PC-3 (cell line): ENCODE measurements at regions of chr14 and their contacts with region 1.

Region 1: GRCh38 chr14:97212399-97212798 is 415.2 kb downstream of the VRK1 start:
- DNase-seq: no peak
- ATAC-seq: no peak
- H3K4me3 ChIP-seq: no peak overlapping the region
- H3K27ac ChIP-seq: no peak overlapping the region
- H3K4me1 ChIP-seq: no peaks in the 10 kb centered on the region
- H3K27me3 ChIP-seq: peaks cover 97% of the 10 kb centered on the region
- CTCF ChIP-seq: no peak

Region 2: GRCh38 chr14:97248973-97249372 is 36.6 kb after region 1 on chr14:
- CTCF ChIA-PET with region 1: interaction called, 3 read pairs
- POLR2A ChIA-PET with region 1: no interaction called
- intact Hi-C with region 1: loop called (anchors 5 kb)
- DNase-seq: no peak
- ATAC-seq: no peak
- H3K4me3 ChIP-seq: no peak overlapping the region
- H3K27ac ChIP-seq: no peak overlapping the region
- H3K4me1 ChIP-seq: 0 out of 2 replicates have a peak, but pooled peaks cover 6% of the 10 kb centered on the region
- H3K27me3 ChIP-seq: peaks cover 50% of the 10 kb centered on the region
- CTCF ChIP-seq: no peak

Region 3: GRCh38 chr14:97410667-97411620 is 198.5 kb after region 1 on chr14:
- CTCF ChIA-PET with region 1: no interaction called
- POLR2A ChIA-PET with region 1: no interaction called
- intact Hi-C with region 1: loop called (anchors 5 kb)
- DNase-seq: peak; percentile 35
- ATAC-seq: peak; percentile 46; the same call in 1 of the 2 replicates
- H3K4me3 ChIP-seq: no peak overlapping the region
- H3K27ac ChIP-seq: 0 out of 2 replicates have a peak overlapping the region, but pooled peaks have one; percentile 8
- H3K4me1 ChIP-seq: no peaks in the 10 kb centered on the region
- H3K27me3 ChIP-seq: peaks cover 90% of the 10 kb centered on the region
- CTCF ChIP-seq: peak; percentile 43; the same call in 1 of the 2 replicates